Testis (tissue), 5 donors: ENCODE measurements at regions of chr20 and their contacts with region 1.

Region 1: DNA sequence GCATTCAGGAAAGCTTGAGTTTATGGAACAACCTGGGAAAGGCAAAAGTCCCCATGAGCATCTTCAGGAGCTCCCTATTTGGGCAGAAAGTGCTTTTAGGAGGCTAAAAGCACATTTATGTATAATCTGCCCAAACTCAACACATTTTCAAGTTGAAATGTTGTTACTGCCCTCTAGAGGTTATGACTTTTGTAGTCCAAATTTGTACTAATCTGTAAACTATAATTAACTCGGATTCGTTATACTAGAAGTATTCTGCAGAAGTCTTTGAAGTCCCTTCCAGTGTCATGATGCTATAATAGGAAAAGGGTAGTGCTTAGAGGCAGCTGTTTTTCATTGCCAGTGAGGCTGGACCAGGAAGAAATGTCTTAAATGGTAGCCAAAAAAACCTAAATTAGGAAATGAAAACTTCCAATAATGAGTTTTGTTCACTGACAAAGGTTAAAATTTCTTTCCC is 44.8 kb upstream of the EMILIN3 start:
- DNase-seq: no peak
- H3K4me3 ChIP-seq: no peak overlapping the region
- H3K27ac ChIP-seq: peak overlapping the region in 1 of 2 donors; percentile 23
- H3K4me1 ChIP-seq: peaks cover 12% of the 10 kb centered on the region
- H3K27me3 ChIP-seq: no peaks in the 10 kb centered on the region
- CTCF ChIP-seq: peak in 2 of 3 experiments; percentile 28 to 54
- POLR2A ChIP-seq: no peak

Region 2: DNA sequence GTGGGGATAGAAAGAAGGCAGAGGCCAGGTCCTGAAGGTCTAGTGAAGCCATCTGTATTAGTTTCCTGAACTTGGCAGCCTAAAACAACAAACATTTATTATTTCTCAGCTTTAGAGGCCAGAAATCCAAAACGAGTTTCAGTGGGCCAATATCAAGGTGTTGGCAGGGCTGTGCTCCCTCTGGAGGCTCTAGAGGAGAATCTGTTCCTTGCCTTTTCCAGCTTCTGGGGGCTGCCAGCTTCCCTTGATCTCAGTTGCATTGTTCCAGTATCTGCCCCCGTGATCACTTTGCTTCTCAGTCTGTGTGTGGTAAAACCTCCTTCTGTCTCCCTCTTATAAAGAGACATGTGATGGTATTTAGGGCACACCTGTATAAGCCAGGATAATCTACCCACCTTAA is 804.8 kb before region 1 on chr20:
- intact Hi-C with region 1: no loop called
- DNase-seq: no peak
- H3K4me3 ChIP-seq: no peak overlapping the region
- H3K27ac ChIP-seq: no peak overlapping the region
- H3K4me1 ChIP-seq: no peaks in the 10 kb centered on the region
- H3K27me3 ChIP-seq: no peaks in the 10 kb centered on the region
- CTCF ChIP-seq: no peak
- POLR2A ChIP-seq: no peak

Region 3: GRCh38 chr20:41249406-41250281 is 161.8 kb before region 1 on chr20:
- intact Hi-C with region 1: no loop called
- DNase-seq: peak; percentile 60
- H3K4me3 ChIP-seq: no peak overlapping the region
- H3K27ac ChIP-seq: peak overlapping the region; percentile 73 to 89
- H3K4me1 ChIP-seq: peaks cover 38% of the 10 kb centered on the region
- H3K27me3 ChIP-seq: no peaks in the 10 kb centered on the region
- CTCF ChIP-seq: no peak
- POLR2A ChIP-seq: no peak

Region 4: DNA sequence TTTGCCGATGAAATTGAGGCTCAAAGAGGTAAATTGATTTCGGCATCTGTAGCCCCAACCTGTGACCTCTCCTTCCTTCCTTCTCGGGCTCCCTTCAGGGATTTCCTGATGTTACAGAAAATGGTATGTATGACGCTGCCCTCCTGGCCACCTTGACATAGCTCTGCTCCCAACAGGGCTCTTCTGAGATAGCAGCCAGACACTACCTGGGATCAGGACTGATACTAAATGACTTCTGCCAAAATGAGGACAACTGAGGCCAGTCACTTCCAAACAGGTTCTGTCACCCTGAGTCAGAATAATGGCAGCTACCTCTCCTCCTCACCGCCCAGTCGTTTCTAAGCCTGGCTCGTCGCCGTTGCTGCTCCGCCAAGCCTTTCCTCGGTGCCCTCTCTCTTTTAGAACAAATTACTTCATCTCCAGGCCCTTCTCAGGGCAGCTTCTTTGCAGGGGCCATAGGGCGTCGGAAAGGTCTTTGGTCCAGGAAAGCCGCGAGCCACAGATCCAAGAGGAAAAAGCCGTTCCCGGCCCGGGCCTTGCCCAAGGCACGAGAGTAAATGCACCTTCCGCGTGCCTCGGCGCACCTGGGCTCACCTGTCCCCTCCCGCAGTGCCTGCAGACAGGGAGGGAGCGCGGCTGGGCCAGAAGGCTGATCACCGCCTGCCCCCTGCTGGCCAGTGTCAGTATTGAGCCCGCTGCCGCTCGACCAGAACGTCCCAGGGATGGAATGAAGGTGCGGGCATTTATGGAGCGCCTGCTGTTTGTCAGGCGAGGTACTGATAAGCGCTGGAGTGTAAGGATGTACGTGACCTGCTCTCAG is 71.7 kb before region 1 on chr20:
- intact Hi-C with region 1: loop called (anchors 10 kb)
- DNase-seq: peak; percentile 89
- H3K4me3 ChIP-seq: peak overlapping the region; percentile 29 to 51
- H3K27ac ChIP-seq: no peak overlapping the region
- H3K4me1 ChIP-seq: peaks cover 14% of the 10 kb centered on the region
- H3K27me3 ChIP-seq: no peaks in the 10 kb centered on the region
- CTCF ChIP-seq: peak; percentile 97 to 99 (median 98)
- POLR2A ChIP-seq: no peak

Region 5: GRCh38 chr20:41497186-41497864 is 85.9 kb after region 1 on chr20:
- intact Hi-C with region 1: no loop called
- DNase-seq: no peak
- H3K4me3 ChIP-seq: no peak overlapping the region
- H3K27ac ChIP-seq: no peak overlapping the region
- H3K4me1 ChIP-seq: no peaks in the 10 kb centered on the region
- H3K27me3 ChIP-seq: no peaks in the 10 kb centered on the region
- CTCF ChIP-seq: no peak
- POLR2A ChIP-seq: no peak

Region 6: DNA sequence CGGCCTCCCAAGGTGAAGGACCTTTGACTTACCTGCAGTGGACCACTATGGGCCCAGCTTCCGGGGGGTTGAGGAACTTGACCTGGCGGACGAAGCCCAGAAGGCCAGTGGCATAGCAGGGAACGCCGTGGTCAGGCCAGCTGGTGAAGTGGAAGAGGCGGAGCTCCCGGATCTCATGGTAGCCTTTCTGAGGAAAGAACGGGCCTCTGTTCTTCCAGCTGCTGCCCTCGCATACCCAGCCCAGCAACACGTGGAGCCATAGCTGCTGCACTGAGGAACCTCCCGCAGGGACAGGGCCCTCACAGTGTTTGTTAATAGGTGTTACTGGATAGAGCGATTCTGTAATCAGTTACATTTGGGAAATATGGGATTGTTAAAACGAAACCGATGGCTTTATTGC is 698.9 kb after region 1 on chr20:
- intact Hi-C with region 1: no loop called
- DNase-seq: no peak
- H3K4me3 ChIP-seq: no peak overlapping the region
- H3K27ac ChIP-seq: no peak overlapping the region
- H3K4me1 ChIP-seq: no peaks in the 10 kb centered on the region
- H3K27me3 ChIP-seq: no peaks in the 10 kb centered on the region
- CTCF ChIP-seq: no peak
- POLR2A ChIP-seq: no peak